ENCODE measurements at regions of chr1 and their contacts with region 1.

Region 1: GRCh38 chr1:94463765-94464330 is 45.7 kb downstream of the ABCD3 start:
- DNase-seq: no peak
- ATAC-seq: peak; percentile 69 to 83 (median 78)
- H3K4me3 ChIP-seq: no peak overlapping the region
- H3K27ac ChIP-seq: peak overlapping the region in 1 of 12 donors; percentile 58
- H3K4me1 ChIP-seq: peaks cover 0 to 12% (median 6%) of the 10 kb centered on the region in 12 donors
- H3K27me3 ChIP-seq: no peaks in the 10 kb centered on the region
- CTCF ChIP-seq: peak; percentile 16 to 70 (median 54)
- POLR2A ChIP-seq: no peak

Region 2: DNA sequence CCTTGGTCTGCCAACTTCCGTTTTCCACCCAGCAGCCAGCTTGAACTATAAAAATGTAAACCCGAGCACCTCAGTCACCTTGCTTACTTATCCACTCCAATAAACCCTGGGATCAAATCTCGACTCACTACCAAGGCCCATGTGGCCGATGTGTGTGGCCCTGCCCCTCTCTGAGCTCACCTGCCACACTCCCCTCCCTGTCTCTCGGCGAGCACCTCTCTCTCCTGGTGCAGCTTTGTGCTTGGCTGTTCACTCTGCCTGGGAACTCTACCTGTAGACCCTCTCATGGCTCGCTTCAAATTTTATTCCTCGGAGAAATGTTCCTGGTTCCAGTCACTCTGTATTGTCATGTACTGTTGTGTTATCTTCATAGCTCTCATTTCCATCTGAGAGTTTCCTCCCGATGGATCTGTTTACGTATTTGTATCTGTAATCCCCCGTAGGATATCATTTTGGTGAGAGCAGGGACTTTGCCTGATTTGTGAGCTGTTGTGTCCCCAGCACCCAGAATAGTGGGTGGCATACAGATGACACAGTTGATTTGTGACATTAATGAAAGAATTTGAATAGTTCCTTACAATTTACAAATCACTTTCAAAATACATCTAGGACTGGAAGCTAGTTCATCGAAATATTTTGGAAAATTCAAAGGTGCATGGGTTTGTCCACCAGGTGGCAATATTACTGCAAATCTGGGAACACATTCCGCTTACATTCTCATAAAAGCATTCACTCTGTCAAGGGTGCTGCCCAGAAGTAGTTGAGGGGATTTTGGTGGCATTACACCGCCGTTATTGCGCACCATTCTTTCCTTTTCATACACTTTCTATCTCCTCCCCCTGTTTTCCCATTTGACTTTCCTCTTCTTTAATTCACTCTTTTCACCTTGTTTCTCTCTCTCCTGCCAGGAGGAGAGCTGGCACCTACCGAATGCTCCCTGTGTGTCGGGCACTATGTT is 438.2 kb before region 1 on chr1:
- intact Hi-C with region 1: loop called in 7 of 10 experiments (anchors 2 to 10 kb)
- DNase-seq: no peak
- ATAC-seq: peak in 2 of 4 donors; percentile 44 to 51
- H3K4me3 ChIP-seq: peak overlapping the region in 1 of 12 donors; percentile 4
- H3K27ac ChIP-seq: no peak overlapping the region
- H3K4me1 ChIP-seq: peaks cover 0 to 23% (median 5%) of the 10 kb centered on the region in 12 donors
- H3K27me3 ChIP-seq: no peaks in the 10 kb centered on the region
- CTCF ChIP-seq: peak; percentile 72 to 89 (median 81)
- POLR2A ChIP-seq: no peak

Region 3: DNA sequence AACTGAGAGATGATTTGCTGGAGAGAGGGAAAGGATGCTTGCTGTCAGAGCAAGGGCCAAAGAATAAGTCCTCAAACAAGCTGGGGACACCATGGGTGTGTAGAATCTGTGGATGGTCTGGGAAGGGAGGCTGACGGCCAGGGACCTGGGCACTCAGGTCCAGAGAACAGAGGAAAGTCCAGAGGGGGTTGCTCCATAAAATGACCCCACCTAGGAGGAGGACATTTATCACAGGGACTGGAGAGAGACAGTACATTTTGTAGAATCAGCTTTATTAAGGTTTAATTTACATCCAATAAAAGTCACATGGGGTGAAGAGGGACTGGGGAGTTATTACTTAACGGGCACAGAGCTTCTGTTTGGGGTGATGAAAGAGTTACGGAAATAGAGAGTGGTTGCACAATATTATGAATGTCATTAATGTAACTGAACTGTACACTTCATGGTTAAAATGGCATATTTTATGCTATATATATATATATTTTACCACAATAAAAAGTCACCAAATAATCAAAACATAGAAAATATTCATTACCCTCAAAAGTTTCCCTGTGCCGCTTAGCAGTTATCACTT is 118.6 kb before region 1 on chr1:
- intact Hi-C with region 1: loop called in 5 of 10 experiments (anchors 5 to 10 kb)
- DNase-seq: no peak
- ATAC-seq: no peak
- H3K4me3 ChIP-seq: no peak overlapping the region
- H3K27ac ChIP-seq: no peak overlapping the region
- H3K4me1 ChIP-seq: peaks cover 0 to 2% (median 0%) of the 10 kb centered on the region in 12 donors
- H3K27me3 ChIP-seq: no peaks in the 10 kb centered on the region
- CTCF ChIP-seq: no peak
- POLR2A ChIP-seq: no peak

Region 4: GRCh38 chr1:94396356-94397010 is 67.4 kb before region 1 on chr1:
- intact Hi-C with region 1: loop called in 1 of 10 experiments (anchors 2 kb)
- DNase-seq: no peak
- ATAC-seq: no peak
- H3K4me3 ChIP-seq: no peak overlapping the region
- H3K27ac ChIP-seq: no peak overlapping the region
- H3K4me1 ChIP-seq: peaks cover 0 to 3% (median 0%) of the 10 kb centered on the region in 12 donors
- H3K27me3 ChIP-seq: no peaks in the 10 kb centered on the region
- CTCF ChIP-seq: peak in 6 of 12 donors; percentile 6 to 27 (median 11)
- POLR2A ChIP-seq: no peak

Region 5: DNA sequence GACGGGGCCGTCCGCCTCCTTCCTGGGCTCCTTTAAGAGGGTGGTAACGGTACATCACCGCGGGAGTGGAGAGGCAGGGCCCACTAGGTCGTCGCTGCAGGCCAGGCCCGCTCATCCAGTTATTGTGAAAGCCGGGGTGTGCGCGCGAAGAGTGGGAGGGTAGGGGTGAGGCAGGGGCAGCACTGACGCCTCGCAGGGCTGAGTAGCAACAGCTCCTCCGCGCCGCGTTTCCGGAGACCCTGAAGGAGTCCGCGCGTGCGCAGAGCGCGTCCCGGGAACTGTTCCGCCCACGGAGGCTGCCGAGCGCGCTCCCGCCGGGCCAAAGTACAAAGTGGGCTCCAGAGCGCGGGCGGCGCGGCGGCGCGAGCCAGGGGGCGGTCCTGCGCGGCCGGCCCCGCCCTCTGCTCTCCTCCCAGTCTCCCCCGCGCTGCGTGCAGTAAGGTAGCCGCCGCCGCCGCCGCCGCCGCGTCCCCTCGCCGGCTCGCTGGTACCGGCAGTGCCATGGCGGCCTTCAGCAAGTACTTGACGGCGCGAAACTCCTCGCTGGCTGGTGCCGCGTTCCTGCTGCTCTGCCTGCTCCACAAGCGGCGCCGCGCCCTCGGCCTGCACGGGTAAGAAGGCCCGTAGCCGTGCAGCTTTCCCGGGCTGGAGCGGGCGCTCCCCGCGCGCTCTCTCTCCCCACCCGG is 45.7 kb before region 1 on chr1 and contains the start of gene ABCD3:
- intact Hi-C with region 1: loop called in 2 of 10 experiments (anchors 5 kb)
- DNase-seq: peak; percentile 98 to 99 (median 99)
- ATAC-seq: peak; percentile 92 to 98 (median 96)
- H3K4me3 ChIP-seq: peak within 1 kb of the TSS; percentile 63 to 99 (median 86)
- H3K27ac ChIP-seq: peak within 1 kb of the TSS; percentile 81 to 97 (median 94)
- H3K4me1 ChIP-seq: peaks cover 0 to 49% (median 30%) of the 10 kb centered on the region in 12 donors
- H3K27me3 ChIP-seq: no peaks in the 10 kb centered on the region
- CTCF ChIP-seq: no peak
- POLR2A ChIP-seq: peak in 1 of 2 donors; percentile 94
- total RNA-seq, gene ABCD3: 29.3 to 94.2 (median 62.1) TPM

Region 6: GRCh38 chr1:94562519-94563260 is 98.8 kb after region 1 on chr1:
- intact Hi-C with region 1: no loop called
- DNase-seq: no peak
- ATAC-seq: no peak
- H3K4me3 ChIP-seq: no peak overlapping the region
- H3K27ac ChIP-seq: no peak overlapping the region
- H3K4me1 ChIP-seq: no peaks in the 10 kb centered on the region
- H3K27me3 ChIP-seq: no peaks in the 10 kb centered on the region
- CTCF ChIP-seq: no peak
- POLR2A ChIP-seq: no peak

Region 7: GRCh38 chr1:94801919-94802546 is 338.2 kb after region 1 on chr1:
- intact Hi-C with region 1: no loop called
- DNase-seq: peak in 3 of 5 donors; percentile 29 to 47 (median 40)
- ATAC-seq: peak; percentile 76 to 87 (median 82)
- H3K4me3 ChIP-seq: peak overlapping the region in 8 of 12 donors; percentile 2 to 40 (median 24)
- H3K27ac ChIP-seq: peak overlapping the region; percentile 28 to 80 (median 64)
- H3K4me1 ChIP-seq: peaks cover 0 to 62% (median 32%) of the 10 kb centered on the region in 12 donors
- H3K27me3 ChIP-seq: no peaks in the 10 kb centered on the region
- CTCF ChIP-seq: peak; percentile 12 to 73 (median 53)
- POLR2A ChIP-seq: no peak

Measured in heart left ventricle (tissue), 16 donors.